Sciatic nerve (tissue), 2 donors: ENCODE measurements at regions of chr2 and their contacts with region 1.

Region 1: GRCh38 chr2:136384531-136385303 is 266.8 kb upstream of the CXCR4 start:
- DNase-seq: no peak
- ATAC-seq: peak; percentile 92

Region 2: GRCh38 chr2:135913727-135914365 is 470.9 kb before region 1 on chr2:
- intact Hi-C with region 1: loop called (anchors 10 kb)
- DNase-seq: no peak
- ATAC-seq: peak; percentile 34

Region 3: GRCh38 chr2:136327162-136327852 is 57.4 kb before region 1 on chr2:
- intact Hi-C with region 1: no loop called
- DNase-seq: no peak
- ATAC-seq: peak; percentile 56